Naive thymus-derived CD8-positive, alpha-beta T cell (primary cell): ENCODE measurements at regions of chr4 and their contacts with region 1.

Region 1: GRCh38 chr4:6909073-6909965 is at the start of gene TBC1D14:
- DNase-seq: peak; percentile 76 to 93 (median 88)
- ATAC-seq: peak; percentile 85 to 87
- H3K4me3 Mint-ChIP-seq: peak within 1 kb of the TSS; percentile 86 to 95 (median 94)
- H3K27ac Mint-ChIP-seq: peak within 1 kb of the TSS; percentile 87 to 95 (median 93)
- H3K4me1 Mint-ChIP-seq: peaks cover 26 to 57% (median 52%) of the 10 kb centered on the region in 4 donors
- H3K27me3 Mint-ChIP-seq: no peaks in the 10 kb centered on the region
- polyA plus RNA-seq, gene TBC1D14: 34.8 to 47.0 (median 36.7) TPM

Region 2: GRCh38 chr4:6892190-6892908 is 17.0 kb before region 1 on chr4:
- POLR2A ChIA-PET with region 1: interaction called, 22 read pairs
- DNase-seq: peak in 5 of 10 donors; percentile 28 to 36 (median 32)
- ATAC-seq: peak; percentile 76 to 77
- H3K4me3 Mint-ChIP-seq: peak overlapping the region; percentile 22 to 82 (median 66)
- H3K27ac Mint-ChIP-seq: peak overlapping the region; percentile 24 to 88 (median 68)
- H3K4me1 Mint-ChIP-seq: peaks cover 14 to 41% (median 29%) of the 10 kb centered on the region in 4 donors
- H3K27me3 Mint-ChIP-seq: no peaks in the 10 kb centered on the region

Region 3: GRCh38 chr4:6926681-6927478 is 17.6 kb after region 1 on chr4:
- POLR2A ChIA-PET with region 1: interaction called, 15 read pairs
- DNase-seq: peak in 8 of 10 donors; percentile 43 to 72 (median 54)
- ATAC-seq: peak; percentile 86 to 91
- H3K4me3 Mint-ChIP-seq: peak overlapping the region; percentile 65 to 87 (median 76)
- H3K27ac Mint-ChIP-seq: peak overlapping the region; percentile 84 to 95 (median 90)
- H3K4me1 Mint-ChIP-seq: peaks cover 53 to 91% (median 81%) of the 10 kb centered on the region in 4 donors
- H3K27me3 Mint-ChIP-seq: no peaks in the 10 kb centered on the region

Region 4: GRCh38 chr4:6942238-6942800 is 33.0 kb after region 1 on chr4:
- POLR2A ChIA-PET with region 1: interaction called, 58 read pairs
- DNase-seq: peak in 9 of 10 donors; percentile 6 to 75 (median 43)
- ATAC-seq: peak; percentile 87 to 89
- H3K4me3 Mint-ChIP-seq: peak overlapping the region; percentile 71 to 90 (median 81)
- H3K27ac Mint-ChIP-seq: peak overlapping the region; percentile 84 to 97 (median 94)
- H3K4me1 Mint-ChIP-seq: peaks cover 35 to 86% (median 76%) of the 10 kb centered on the region in 4 donors
- H3K27me3 Mint-ChIP-seq: no peaks in the 10 kb centered on the region

Region 5: DNA sequence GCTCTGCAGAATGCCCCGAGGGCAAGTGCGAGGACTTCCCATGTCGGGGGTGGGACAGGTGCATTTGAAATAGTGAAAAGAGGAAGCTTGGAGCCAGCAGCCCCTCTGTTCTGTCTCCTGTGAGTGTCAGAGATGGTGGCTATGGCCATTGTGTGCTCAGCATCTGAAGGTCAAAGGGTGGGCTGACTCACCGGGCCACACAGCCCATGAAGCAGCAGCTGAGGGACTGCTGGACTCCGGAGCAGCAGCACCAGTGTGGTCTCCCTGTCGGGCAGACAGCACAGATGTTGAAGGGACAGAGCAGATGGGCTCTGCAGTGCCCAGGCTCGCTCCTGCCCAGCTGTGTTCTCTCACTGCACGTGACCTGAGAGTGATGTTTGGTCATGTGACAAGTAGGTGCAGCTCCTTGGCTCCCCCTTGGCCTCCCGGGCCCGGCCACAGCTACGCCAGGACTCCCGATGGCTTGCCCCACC is 53.9 kb after region 1 on chr4:
- POLR2A ChIA-PET with region 1: no interaction called
- DNase-seq: no peak
- ATAC-seq: no peak
- H3K4me3 Mint-ChIP-seq: no peak overlapping the region
- H3K27ac Mint-ChIP-seq: peak overlapping the region in 3 of 10 donors; percentile 45 to 82 (median 73)
- H3K4me1 Mint-ChIP-seq: peaks cover 22 to 71% (median 64%) of the 10 kb centered on the region in 4 donors
- H3K27me3 Mint-ChIP-seq: no peaks in the 10 kb centered on the region

Region 6: GRCh38 chr4:7042697-7043464 is 133.6 kb after region 1 on chr4 and contains the start of gene TADA2B:
- POLR2A ChIA-PET with region 1: interaction called, 35 read pairs
- DNase-seq: peak; percentile 77 to 94 (median 88)
- ATAC-seq: peak; percentile 73 to 78
- H3K4me3 Mint-ChIP-seq: peak within 1 kb of the TSS; percentile 87 to 95 (median 92)
- H3K27ac Mint-ChIP-seq: peak within 1 kb of the TSS; percentile 72 to 94 (median 90)
- H3K4me1 Mint-ChIP-seq: peaks cover 35 to 55% (median 47%) of the 10 kb centered on the region in 4 donors
- H3K27me3 Mint-ChIP-seq: no peaks in the 10 kb centered on the region
- polyA plus RNA-seq, gene TADA2B: 2.6 to 4.8 (median 4.5) TPM